ENCODE measurements at regions of chr2 and their contacts with region 1.

Region 1: GRCh38 chr2:237512774-237513466 is 25.9 kb downstream of the MLPH start:
- DNase-seq: peak; percentile 65 to 83
- ATAC-seq: peak; percentile 48 to 71
- H3K4me3 ChIP-seq: no peak overlapping the region
- H3K27ac ChIP-seq: peak overlapping the region; percentile 68 to 89 (median 77)
- H3K4me1 ChIP-seq: peaks cover 34 to 36% of the 10 kb centered on the region in 2 donors
- H3K27me3 ChIP-seq: no peaks in the 10 kb centered on the region
- CTCF ChIP-seq: peak; percentile 86 to 94 (median 93)
- POLR2A ChIP-seq: no peak

Region 2: GRCh38 chr2:237391140-237391723 is 121.7 kb before region 1 on chr2:
- in situ Hi-C with region 1: no loop called
- intact Hi-C with region 1: no loop called
- DNase-seq: no peak
- ATAC-seq: no peak
- H3K4me3 ChIP-seq: no peak overlapping the region
- H3K27ac ChIP-seq: peak overlapping the region in 1 of 4 donors; percentile 11
- H3K4me1 ChIP-seq: no peaks in the 10 kb centered on the region
- H3K27me3 ChIP-seq: no peaks in the 10 kb centered on the region
- CTCF ChIP-seq: no peak
- POLR2A ChIP-seq: no peak

Region 3: GRCh38 chr2:237456200-237456843 is 56.6 kb before region 1 on chr2:
- in situ Hi-C with region 1: no loop called
- intact Hi-C with region 1: no loop called
- DNase-seq: peak; percentile 92 to 98
- ATAC-seq: peak; percentile 84 to 87
- H3K4me3 ChIP-seq: no peak overlapping the region
- H3K27ac ChIP-seq: peak overlapping the region; percentile 71 to 85 (median 81)
- H3K4me1 ChIP-seq: peaks cover 26 to 38% of the 10 kb centered on the region in 2 donors
- H3K27me3 ChIP-seq: no peaks in the 10 kb centered on the region
- CTCF ChIP-seq: no peak
- POLR2A ChIP-seq: no peak

Region 4: DNA sequence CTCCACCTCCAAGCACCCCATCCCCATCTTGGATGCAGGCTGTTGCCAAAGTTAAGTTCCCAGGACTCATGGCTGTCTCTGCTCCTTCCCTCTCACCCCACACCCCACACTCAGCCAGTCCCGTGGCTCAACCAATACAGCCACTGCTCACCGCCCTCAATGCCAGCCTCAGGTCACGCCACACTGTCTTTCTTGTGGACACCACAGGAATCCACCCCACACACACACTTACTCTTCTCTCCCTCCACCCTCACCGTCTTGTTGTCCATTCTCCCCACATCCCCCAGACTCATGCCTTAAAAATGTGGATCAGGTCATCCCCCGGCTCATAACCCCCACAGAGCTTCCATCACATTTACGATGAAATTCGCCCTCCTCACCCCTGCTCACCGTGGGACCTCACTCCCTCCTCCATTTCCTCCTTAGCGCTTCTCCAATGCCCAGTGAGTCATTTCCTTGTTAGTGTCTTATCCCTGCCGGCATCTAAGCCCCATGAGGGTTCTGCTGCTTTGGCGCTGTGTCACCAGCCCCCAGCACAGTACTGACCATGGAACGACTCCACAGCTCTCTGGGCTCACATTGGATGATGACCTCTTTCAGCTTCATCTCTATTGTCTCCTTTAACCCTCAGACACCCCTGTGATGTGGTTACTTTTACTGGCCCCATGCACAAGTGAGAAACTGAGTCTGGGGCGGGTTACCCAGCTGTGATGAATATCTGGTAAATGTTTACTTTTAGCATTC is 12.1 kb before region 1 on chr2:
- in situ Hi-C with region 1: no loop called
- intact Hi-C with region 1: no loop called
- DNase-seq: no peak
- ATAC-seq: no peak
- H3K4me3 ChIP-seq: no peak overlapping the region
- H3K27ac ChIP-seq: no peak overlapping the region
- H3K4me1 ChIP-seq: peaks cover 0 to 5% of the 10 kb centered on the region in 2 donors
- H3K27me3 ChIP-seq: no peaks in the 10 kb centered on the region
- CTCF ChIP-seq: no peak
- POLR2A ChIP-seq: no peak

Region 5: GRCh38 chr2:237558906-237559641 is 46.2 kb after region 1 on chr2:
- in situ Hi-C with region 1: no loop called
- intact Hi-C with region 1: loop called (anchors 1 kb)
- DNase-seq: peak; percentile 88 to 90
- ATAC-seq: peak; percentile 95 to 96
- H3K4me3 ChIP-seq: peak overlapping the region in 1 of 4 donors; percentile 0
- H3K27ac ChIP-seq: peak overlapping the region in 3 of 4 donors; percentile 20 to 79 (median 77)
- H3K4me1 ChIP-seq: peaks cover 12 to 14% of the 10 kb centered on the region in 2 donors
- H3K27me3 ChIP-seq: peaks cover 0 to 4% (median 0%) of the 10 kb centered on the region in 3 donors
- CTCF ChIP-seq: peak in 2 of 5 experiments; percentile 13 to 24
- POLR2A ChIP-seq: no peak

Region 6: GRCh38 chr2:237572021-237572741 is 59.3 kb after region 1 on chr2:
- in situ Hi-C with region 1: loop called (anchors 5 kb)
- intact Hi-C with region 1: loop called (anchors 1 kb)
- DNase-seq: peak; percentile 83 to 85
- ATAC-seq: peak; percentile 91 to 95
- H3K4me3 ChIP-seq: peak overlapping the region; percentile 15 to 45 (median 38)
- H3K27ac ChIP-seq: peak overlapping the region; percentile 36 to 69 (median 47)
- H3K4me1 ChIP-seq: peaks cover 13% of the 10 kb centered on the region in 2 donors
- H3K27me3 ChIP-seq: no peaks in the 10 kb centered on the region
- CTCF ChIP-seq: peak; percentile 99
- POLR2A ChIP-seq: no peak

Region 7: GRCh38 chr2:237662671-237663093 is 149.8 kb after region 1 on chr2:
- in situ Hi-C with region 1: no loop called
- intact Hi-C with region 1: loop called (anchors 10 kb)
- DNase-seq: peak; percentile 84 to 92
- ATAC-seq: peak; percentile 88 to 93
- H3K4me3 ChIP-seq: peak overlapping the region in 2 of 4 donors; percentile 0 to 23
- H3K27ac ChIP-seq: peak overlapping the region; percentile 75 to 88 (median 84)
- H3K4me1 ChIP-seq: peaks cover 32 to 36% of the 10 kb centered on the region in 2 donors
- H3K27me3 ChIP-seq: no peaks in the 10 kb centered on the region
- CTCF ChIP-seq: peak in 1 of 5 experiments; percentile 18
- POLR2A ChIP-seq: no peak

Measured in gastrocnemius medialis (tissue), 4 donors.